ENCODE measurements at regions of chr20 and their contacts with region 1.

Region 1: DNA sequence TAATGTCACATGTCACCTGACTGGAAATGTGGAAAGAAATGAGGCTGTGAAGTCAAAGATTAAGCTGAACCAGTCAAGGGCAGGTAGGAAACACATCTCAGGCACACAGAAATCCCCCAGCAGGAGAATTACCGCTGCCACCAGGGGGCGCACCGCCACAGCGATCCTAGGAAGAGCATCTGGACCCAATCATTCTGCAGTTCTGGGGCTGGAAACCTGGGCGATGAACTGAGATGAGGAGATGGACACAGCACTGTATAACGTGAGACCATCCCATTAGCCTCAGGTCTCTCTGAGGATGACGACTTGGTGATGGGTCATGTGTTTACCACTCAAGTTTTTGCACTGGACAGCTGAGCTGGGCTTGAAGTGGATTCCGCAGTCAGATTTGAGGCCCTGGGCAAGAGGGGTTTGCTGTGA is 6.5 kb upstream of the SLC24A3 start:
- DNase-seq: peak; percentile 76
- ATAC-seq: peak; percentile 53
- H3K4me3 Mint-ChIP-seq: no peak overlapping the region
- H3K27ac Mint-ChIP-seq: no peak overlapping the region
- H3K4me1 Mint-ChIP-seq: no peaks in the 10 kb centered on the region
- H3K27me3 Mint-ChIP-seq: peaks cover 24% of the 10 kb centered on the region

Region 2: DNA sequence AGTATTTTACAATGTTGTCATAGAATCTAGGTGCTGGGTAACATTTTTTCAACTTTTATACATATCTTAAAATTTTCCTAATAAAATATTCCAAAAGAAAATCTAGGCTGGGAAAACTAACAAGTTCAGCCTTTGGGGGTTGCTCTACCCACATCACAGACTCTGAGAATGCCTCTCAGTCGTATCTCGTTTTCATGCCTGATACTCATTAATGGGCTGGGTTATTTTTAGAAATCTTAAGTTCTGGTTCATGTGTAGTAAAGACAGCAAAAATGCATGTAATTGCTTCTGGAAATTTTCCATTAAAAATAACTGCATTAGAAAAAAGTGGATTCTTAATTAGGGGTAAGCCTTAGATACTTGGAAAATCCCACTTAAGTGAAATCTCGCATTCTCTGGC is 155.8 kb after region 1 on chr20:
- CTCF ChIA-PET with region 1: no interaction called
- POLR2A ChIA-PET with region 1: no interaction called
- DNase-seq: no peak
- ATAC-seq: no peak
- H3K4me3 Mint-ChIP-seq: no peak overlapping the region
- H3K27ac Mint-ChIP-seq: no peak overlapping the region
- H3K4me1 Mint-ChIP-seq: no peaks in the 10 kb centered on the region
- H3K27me3 Mint-ChIP-seq: peaks cover 2% of the 10 kb centered on the region

Region 3: GRCh38 chr20:19583532-19584175 is 377.7 kb after region 1 on chr20:
- CTCF ChIA-PET with region 1: interaction called, 49 read pairs
- POLR2A ChIA-PET with region 1: no interaction called
- DNase-seq: peak; percentile 65
- ATAC-seq: peak; percentile 61
- H3K4me3 Mint-ChIP-seq: no peak overlapping the region
- H3K27ac Mint-ChIP-seq: no peak overlapping the region
- H3K4me1 Mint-ChIP-seq: no peaks in the 10 kb centered on the region
- H3K27me3 Mint-ChIP-seq: peaks cover 3% of the 10 kb centered on the region

Region 4: DNA sequence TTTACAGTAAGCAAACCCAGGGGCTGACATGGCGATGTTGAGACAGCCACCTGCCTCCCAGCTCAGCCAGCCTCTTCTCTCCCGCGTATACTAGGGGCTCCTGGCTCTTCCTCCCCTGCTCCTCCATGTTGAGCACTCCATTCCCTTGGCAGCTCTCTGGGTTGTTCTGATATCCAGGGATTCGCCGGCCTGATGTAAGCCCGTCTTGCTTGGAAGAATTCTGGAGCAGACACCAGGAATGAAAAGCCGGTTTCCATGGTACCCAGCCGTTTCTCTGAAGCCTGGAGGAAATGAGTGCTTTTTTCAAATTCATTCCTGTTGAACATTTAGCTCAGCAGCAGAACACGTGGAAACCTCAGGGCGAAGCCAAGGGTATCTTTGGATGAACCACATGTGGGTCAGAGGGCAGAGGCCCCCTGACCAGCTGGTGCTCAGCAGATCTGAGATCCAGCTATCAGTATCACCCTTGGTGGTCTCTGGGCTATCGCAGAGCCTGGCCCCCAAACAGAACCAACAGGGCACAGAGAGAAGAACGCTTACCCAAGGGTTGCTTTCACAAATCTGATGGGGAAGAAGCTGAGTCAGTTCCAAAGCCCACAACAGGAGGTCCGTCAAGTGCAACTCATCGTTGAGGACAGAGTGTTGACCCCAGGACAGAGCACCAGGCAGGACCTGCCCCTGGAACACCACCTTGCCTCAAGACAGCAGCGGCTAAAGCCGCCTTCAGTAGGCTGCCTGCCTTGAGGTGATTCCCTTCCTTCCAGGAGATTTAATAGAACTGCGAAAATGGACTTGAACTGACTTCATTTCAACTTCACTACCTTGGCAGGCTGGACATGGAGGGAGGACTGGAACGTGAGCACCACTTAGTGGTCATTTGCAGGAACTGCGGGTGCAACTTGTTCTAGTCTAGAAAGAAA is 456.0 kb after region 1 on chr20:
- CTCF ChIA-PET with region 1: interaction called, 18 read pairs
- POLR2A ChIA-PET with region 1: no interaction called
- DNase-seq: peak; percentile 64
- ATAC-seq: peak; percentile 47
- H3K4me3 Mint-ChIP-seq: no peak overlapping the region
- H3K27ac Mint-ChIP-seq: no peak overlapping the region
- H3K4me1 Mint-ChIP-seq: peaks cover 2% of the 10 kb centered on the region
- H3K27me3 Mint-ChIP-seq: no peaks in the 10 kb centered on the region